A673 (cell line): ENCODE measurements at regions of chr18 and their contacts with region 1.

Region 1: DNA sequence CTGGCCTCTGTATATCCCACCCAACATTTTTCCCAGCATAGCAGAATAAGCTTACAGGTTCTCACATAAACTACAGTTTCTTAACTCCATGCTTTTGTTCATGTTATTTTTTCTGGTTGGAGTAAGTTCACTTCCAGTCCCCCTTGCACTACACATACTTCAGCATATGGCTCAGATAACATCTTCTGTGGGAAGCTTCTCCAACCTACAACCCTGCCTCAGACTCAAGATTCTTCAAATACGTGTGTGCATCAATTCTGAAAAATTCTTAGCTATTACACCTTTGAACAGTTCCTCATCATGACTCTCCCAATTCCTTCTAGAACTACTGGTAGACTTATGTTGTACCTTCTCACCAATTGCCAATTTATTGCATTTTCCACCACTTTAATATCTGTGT is 7.5 kb upstream of the CPLX4 start:
- DNase-seq: no peak
- H3K4me3 ChIP-seq: no peak overlapping the region
- H3K27ac ChIP-seq: no peak overlapping the region
- H3K4me1 ChIP-seq: no peaks in the 10 kb centered on the region
- H3K27me3 ChIP-seq: no peaks in the 10 kb centered on the region
- CTCF ChIP-seq: no peak

Region 2: GRCh38 chr18:59008301-59008974 is 317.5 kb before region 1 on chr18:
- CTCF ChIA-PET with region 1: no interaction called
- POLR2A ChIA-PET with region 1: no interaction called
- intact Hi-C with region 1: no loop called
- DNase-seq: peak; percentile 71
- H3K4me3 ChIP-seq: no peak overlapping the region
- H3K27ac ChIP-seq: peak overlapping the region; percentile 95
- H3K4me1 ChIP-seq: peaks cover 70% of the 10 kb centered on the region
- H3K27me3 ChIP-seq: no peaks in the 10 kb centered on the region
- CTCF ChIP-seq: no peak

Region 3: GRCh38 chr18:59249205-59249774 is 76.7 kb before region 1 on chr18:
- CTCF ChIA-PET with region 1: no interaction called
- POLR2A ChIA-PET with region 1: no interaction called
- intact Hi-C with region 1: no loop called
- DNase-seq: peak; percentile 94
- H3K4me3 ChIP-seq: no peak overlapping the region
- H3K27ac ChIP-seq: peak overlapping the region; percentile 44
- H3K4me1 ChIP-seq: peaks cover 19% of the 10 kb centered on the region
- H3K27me3 ChIP-seq: no peaks in the 10 kb centered on the region
- CTCF ChIP-seq: peak; percentile 86

Region 4: DNA sequence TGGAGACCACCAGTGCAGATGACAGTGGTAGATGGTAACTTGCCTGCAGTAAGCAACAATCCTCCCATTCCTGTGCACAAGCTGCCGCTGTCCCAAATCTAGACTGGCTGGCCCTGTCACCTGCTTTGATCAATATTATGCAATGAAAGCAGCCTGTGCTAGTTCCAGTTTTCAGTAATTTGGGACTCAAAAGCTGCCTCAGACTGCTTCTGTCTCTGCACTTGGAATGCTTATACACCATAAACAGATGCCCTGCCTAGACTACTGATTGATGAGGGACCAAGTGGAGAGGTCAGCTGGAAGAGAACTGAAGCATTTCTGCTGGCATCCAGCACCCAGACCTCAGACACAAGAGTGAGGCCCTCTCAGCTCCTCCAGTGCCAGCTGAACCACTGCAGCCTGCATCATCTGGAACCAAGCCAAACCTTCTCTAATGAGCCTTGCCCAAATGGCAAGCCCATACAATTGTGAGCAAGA is 346.3 kb after region 1 on chr18:
- CTCF ChIA-PET with region 1: no interaction called
- POLR2A ChIA-PET with region 1: no interaction called
- intact Hi-C with region 1: loop called (anchors 5 kb)
- DNase-seq: no peak
- H3K4me3 ChIP-seq: no peak overlapping the region
- H3K27ac ChIP-seq: no peak overlapping the region
- H3K4me1 ChIP-seq: no peaks in the 10 kb centered on the region
- H3K27me3 ChIP-seq: peaks cover 4% of the 10 kb centered on the region
- CTCF ChIP-seq: no peak